ENCODE measurements at regions of chr4 and their contacts with region 1.

Region 1: GRCh38 chr4:154551872-154552686 is 1.9 kb upstream of the PLRG1 start:
- DNase-seq: peak; percentile 61
- H3K4me3 ChIP-seq: no peak overlapping the region
- H3K27ac ChIP-seq: no peak overlapping the region
- H3K4me1 ChIP-seq: peaks cover 17% of the 10 kb centered on the region
- H3K27me3 ChIP-seq: no peaks in the 10 kb centered on the region
- CTCF ChIP-seq: peak; percentile 83 to 86

Region 2: GRCh38 chr4:154506253-154506652 is 45.8 kb before region 1 on chr4:
- CTCF ChIA-PET with region 1: no interaction called
- dilution Hi-C with region 1: no loop called
- in situ Hi-C with region 1: no loop called
- intact Hi-C with region 1: loop called (anchors 1 kb)
- DNase-seq: peak; percentile 33
- H3K4me3 ChIP-seq: no peak overlapping the region
- H3K27ac ChIP-seq: peak overlapping the region; percentile 49
- H3K4me1 ChIP-seq: peaks cover 16% of the 10 kb centered on the region
- H3K27me3 ChIP-seq: no peaks in the 10 kb centered on the region
- CTCF ChIP-seq: peak; percentile 41 to 60

Region 3: GRCh38 chr4:154529728-154530519 is 22.2 kb before region 1 on chr4:
- CTCF ChIA-PET with region 1: no interaction called
- dilution Hi-C with region 1: no loop called
- in situ Hi-C with region 1: no loop called
- intact Hi-C with region 1: no loop called
- DNase-seq: peak; percentile 89
- H3K4me3 ChIP-seq: peak overlapping the region in 2 of 3 experiments; percentile 7 to 21
- H3K27ac ChIP-seq: peak overlapping the region; percentile 74
- H3K4me1 ChIP-seq: peaks cover 17% of the 10 kb centered on the region
- H3K27me3 ChIP-seq: no peaks in the 10 kb centered on the region
- CTCF ChIP-seq: no peak

Region 4: GRCh38 chr4:154578919-154579318 is 26.8 kb after region 1 on chr4:
- CTCF ChIA-PET with region 1: no interaction called
- dilution Hi-C with region 1: no loop called
- in situ Hi-C with region 1: no loop called
- intact Hi-C with region 1: no loop called
- DNase-seq: peak; percentile 20
- H3K4me3 ChIP-seq: no peak overlapping the region
- H3K27ac ChIP-seq: no peak overlapping the region
- H3K4me1 ChIP-seq: peaks cover 18% of the 10 kb centered on the region
- H3K27me3 ChIP-seq: no peaks in the 10 kb centered on the region
- CTCF ChIP-seq: no peak

Region 5: DNA sequence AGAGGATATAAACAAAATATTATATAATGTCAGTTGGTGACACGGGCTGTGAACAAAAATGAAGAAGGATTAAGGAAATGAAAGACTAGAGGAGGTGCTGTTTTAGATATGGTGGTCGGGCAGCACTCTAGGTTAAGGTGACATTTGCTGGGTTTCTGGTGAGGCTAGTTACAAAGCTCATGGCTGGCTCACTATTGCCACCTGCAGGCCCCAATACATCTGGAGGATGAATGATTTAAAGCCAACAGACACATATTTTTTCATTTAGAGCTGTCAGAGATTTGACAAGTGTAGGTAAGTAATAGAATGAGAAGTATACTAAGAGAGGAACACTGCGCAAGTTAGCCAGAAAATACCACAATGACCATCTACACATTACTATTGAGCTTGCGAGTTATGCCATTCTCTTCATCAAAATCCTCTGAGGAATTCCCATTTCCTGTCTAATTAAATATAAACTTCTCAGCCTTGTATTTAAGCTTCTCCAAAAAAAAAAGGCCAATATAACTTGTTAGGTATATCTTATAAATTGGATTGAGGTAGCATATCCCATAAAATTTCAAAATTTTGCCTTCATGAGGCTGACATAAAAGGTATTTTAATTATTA is 66.7 kb after region 1 on chr4:
- CTCF ChIA-PET with region 1: interaction called, 8 read pairs
- dilution Hi-C with region 1: loop called (anchors 5 kb)
- in situ Hi-C with region 1: loop called (anchors 5 kb)
- intact Hi-C with region 1: loop called (anchors 1 kb)
- DNase-seq: peak; percentile 41
- H3K4me3 ChIP-seq: no peak overlapping the region
- H3K27ac ChIP-seq: no peak overlapping the region
- H3K4me1 ChIP-seq: no peaks in the 10 kb centered on the region
- H3K27me3 ChIP-seq: no peaks in the 10 kb centered on the region
- CTCF ChIP-seq: peak; percentile 76 to 78

Region 6: DNA sequence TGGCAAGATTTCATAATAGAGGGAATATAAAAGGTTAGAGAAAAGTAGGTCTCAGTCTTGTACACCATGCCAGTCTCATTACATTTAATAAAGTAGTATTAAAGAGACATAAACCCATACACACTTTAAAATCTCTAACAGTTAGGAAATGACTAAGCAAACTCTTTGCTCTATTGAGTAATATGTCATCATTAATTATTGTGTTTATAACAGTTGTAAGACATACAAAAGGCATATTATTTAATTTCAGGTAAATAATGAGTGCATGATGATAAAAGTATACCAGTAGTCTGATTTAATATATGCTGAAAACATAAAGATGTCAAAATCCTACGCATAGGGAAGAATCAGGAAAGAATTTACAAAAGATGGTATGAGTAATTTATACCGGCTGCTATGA is 91.4 kb after region 1 on chr4:
- CTCF ChIA-PET with region 1: no interaction called
- dilution Hi-C with region 1: no loop called
- in situ Hi-C with region 1: no loop called
- intact Hi-C with region 1: no loop called
- DNase-seq: peak; percentile 28
- H3K4me3 ChIP-seq: no peak overlapping the region
- H3K27ac ChIP-seq: peak overlapping the region; percentile 3
- H3K4me1 ChIP-seq: peaks cover 12% of the 10 kb centered on the region
- H3K27me3 ChIP-seq: no peaks in the 10 kb centered on the region
- CTCF ChIP-seq: no peak

Region 7: DNA sequence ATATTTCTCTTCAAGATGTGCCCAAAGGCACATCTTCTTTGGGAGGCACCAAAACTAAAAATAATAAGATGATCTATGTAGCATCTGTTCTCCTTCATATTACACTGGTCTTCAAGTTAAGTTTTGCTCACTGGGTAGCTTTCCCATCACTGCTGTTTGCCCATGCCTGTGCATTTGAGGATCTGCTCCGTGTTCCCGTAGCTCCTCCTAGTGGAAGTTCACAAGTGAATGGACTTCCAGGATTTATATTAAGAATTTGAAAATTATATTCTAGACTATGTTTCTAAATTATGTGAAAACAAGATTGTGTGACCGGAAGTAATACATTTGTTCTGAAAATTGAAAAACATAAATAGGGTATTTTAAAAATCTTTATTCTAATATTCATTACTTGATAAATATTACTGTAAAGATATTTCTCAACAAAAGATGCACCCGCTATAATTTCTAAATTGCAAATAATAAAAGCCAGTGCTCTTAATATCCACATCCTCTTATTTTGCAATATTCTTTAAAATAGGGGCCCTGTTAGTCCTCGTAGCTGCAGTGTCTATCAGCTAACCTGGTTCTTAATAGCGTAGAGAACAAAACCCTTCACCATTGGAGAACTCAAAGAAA is 376.7 kb after region 1 on chr4:
- CTCF ChIA-PET with region 1: no interaction called
- dilution Hi-C with region 1: no loop called
- in situ Hi-C with region 1: no loop called
- intact Hi-C with region 1: loop called (anchors 10 kb)
- DNase-seq: peak; percentile 23
- H3K4me3 ChIP-seq: no peak overlapping the region
- H3K27ac ChIP-seq: no peak overlapping the region
- H3K4me1 ChIP-seq: no peaks in the 10 kb centered on the region
- H3K27me3 ChIP-seq: no peaks in the 10 kb centered on the region
- CTCF ChIP-seq: peak; percentile 41 to 76

Region 8: GRCh38 chr4:154973244-154974035 is 421.4 kb after region 1 on chr4:
- CTCF ChIA-PET with region 1: no interaction called
- dilution Hi-C with region 1: no loop called
- in situ Hi-C with region 1: no loop called
- intact Hi-C with region 1: no loop called
- DNase-seq: peak; percentile 19
- H3K4me3 ChIP-seq: no peak overlapping the region
- H3K27ac ChIP-seq: no peak overlapping the region
- H3K4me1 ChIP-seq: peaks cover 6% of the 10 kb centered on the region
- H3K27me3 ChIP-seq: no peaks in the 10 kb centered on the region
- CTCF ChIP-seq: no peak